ENCODE measurements at regions of chr13 and their contacts with region 1.

Region 1: DNA sequence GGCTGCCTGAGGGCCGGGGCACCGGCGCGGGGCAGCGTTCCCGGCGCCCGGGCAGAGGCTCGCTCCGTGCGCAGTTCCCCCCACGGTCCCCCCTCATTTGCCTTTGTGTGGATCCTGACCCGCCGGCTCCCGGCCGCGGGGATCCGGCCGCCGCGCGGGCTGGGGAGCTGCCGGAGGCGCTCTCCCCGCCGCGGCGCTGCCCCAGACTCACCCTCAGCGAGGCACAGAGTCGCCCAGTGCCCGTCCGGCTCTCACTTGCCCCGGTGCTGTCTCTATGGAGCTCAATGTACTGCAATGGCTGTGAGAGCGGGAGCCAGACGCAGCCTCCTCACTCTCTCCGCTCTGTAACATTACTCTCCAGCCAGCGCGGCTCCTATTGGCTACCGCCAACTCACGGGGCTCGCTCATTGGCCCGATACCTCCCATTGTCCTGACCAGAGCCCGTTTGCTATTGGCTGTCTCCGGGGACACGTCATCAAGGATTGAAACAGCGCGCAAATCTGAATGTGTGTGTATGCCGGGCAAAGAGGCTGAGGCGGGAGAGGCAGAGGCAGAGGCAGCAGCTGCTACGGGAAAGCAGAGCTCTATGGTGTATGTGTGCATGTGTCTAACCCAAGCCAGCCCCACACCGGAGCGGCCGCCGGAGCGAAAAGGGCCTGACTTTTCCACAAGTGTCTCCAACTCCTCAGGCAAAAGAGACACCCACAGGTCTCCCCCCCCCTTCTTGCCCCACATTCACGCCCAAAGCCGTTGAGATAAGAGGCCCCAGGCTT is at the start of gene HMGB1:
- DNase-seq: peak; percentile 99
- ATAC-seq: peak; percentile 98
- total RNA-seq, gene HMGB1: 183 TPM

Region 2: DNA sequence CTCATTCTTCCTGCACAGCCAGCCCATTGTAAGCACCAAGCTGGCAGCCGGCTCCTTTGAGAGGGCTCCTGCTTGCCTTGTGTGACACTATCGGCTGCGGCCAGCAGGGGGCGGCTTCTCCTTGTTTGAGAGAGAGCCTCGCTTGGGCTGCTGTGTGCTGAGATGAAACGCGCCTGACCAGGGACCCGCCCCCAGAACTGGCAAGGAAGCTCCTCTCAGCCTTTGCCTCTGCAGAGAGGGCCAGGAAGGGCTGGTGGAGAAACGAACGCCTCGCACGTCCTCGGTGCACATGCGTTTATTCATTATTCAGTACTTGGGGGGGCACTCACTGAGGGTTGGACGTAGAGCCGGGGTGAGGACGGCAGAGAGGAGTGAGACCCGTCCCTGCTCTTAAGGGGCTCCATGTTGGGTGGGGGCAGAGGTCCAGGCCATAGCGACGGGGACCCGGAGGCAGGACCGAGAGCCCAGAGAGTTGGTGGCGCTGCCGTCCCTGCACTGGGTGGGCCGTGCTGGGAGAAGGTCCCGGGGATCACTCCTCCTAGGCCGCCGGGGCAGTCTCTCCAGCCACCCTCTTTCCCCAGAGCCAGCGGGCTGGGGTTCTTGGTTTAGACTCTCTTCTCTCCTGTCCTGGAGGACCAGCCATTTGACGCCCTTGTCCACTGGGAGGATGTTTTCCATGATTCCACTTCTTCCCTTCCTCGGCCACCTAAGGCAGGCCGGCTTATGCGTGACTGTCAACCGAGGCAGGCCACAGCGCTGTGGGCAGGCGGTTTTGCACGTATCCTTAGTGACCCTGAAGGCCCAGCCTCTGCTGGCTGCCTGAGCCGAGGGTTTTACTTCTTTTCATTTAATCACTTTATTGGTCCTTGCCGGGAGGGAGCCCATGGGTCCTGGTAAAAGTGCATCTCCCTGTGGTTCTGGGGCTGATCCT is 332.9 kb before region 1 on chr13:
- intact Hi-C with region 1: loop called (anchors 5 kb)
- DNase-seq: peak; percentile 98
- ATAC-seq: peak; percentile 95

Region 3: GRCh38 chr13:30341815-30342570 is 123.8 kb before region 1 on chr13:
- intact Hi-C with region 1: loop called (anchors 10 kb)
- DNase-seq: peak; percentile 92
- ATAC-seq: peak; percentile 90

Region 4: DNA sequence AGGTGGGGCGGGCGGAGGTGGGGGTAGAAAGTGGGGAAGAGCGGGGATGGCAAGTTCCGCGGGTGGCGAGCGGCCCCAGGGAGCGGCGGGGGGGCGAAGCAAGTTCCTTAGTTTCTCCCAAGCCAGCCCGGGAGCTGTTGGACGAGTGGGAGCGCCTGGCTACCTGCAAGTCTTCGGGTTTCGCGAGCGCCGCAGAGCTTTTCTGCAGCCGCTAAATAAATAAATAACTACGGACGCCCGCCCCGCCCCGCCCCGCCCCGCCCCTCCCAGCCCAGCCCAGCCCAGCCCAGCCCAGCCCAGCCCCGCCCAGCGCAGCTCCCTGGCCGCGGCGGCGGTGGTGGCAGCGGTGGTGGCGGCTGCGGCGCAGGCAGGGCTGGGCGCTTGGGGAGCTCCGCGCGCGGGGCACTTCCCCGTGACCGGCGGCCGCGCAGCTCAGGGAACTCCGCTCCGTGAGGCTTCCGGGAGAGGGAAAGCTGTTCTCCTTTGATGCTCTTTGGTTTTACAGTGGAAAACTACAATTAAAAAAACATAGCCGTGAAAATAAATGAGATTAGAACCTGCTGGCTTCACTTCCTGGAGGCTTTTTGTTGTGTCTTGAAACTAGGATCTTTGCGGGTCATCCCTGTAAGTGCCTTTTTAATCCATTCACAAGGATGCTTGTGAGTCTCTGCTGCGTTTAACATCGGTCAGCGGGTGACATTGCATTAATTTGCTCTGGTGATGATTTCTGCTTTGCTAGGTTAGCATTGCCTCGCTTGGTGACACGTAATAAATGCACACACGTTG is 43.5 kb before region 1 on chr13 and contains the start of gene UBE2L5:
- intact Hi-C with region 1: loop called (anchors 1 kb)
- DNase-seq: peak; percentile 93
- ATAC-seq: peak; percentile 92
- total RNA-seq, gene UBE2L5: not detected

Region 5: GRCh38 chr13:30486230-30487074 is 20.7 kb after region 1 on chr13:
- intact Hi-C with region 1: no loop called
- DNase-seq: no peak
- ATAC-seq: no peak

Region 6: DNA sequence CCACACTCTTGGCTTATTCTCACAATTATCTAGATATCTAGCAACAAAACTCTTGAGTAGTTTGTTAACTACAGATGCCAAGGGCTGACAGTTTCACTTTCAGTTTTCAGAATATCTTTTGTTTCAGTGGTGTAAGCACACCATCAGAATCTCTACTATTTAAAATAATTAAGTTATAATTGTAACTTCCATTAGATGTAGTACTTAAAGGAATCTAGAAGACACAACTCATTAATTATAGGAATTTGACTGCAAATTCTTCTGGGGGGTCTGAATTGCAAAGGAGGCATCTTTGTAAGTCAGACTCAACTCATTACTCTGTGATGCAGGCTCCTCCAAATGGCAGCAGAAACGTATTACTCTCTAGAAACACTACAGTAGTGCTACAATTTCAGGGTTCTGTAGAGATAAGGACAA is 107.1 kb after region 1 on chr13:
- intact Hi-C with region 1: loop called (anchors 5 kb)
- DNase-seq: no peak
- ATAC-seq: peak; percentile 68

Region 7: GRCh38 chr13:30673669-30674521 is 208.1 kb after region 1 on chr13:
- intact Hi-C with region 1: loop called (anchors 1 kb)
- DNase-seq: peak; percentile 95
- ATAC-seq: peak; percentile 95

Region 8: GRCh38 chr13:31044377-31045285 is 578.9 kb after region 1 on chr13:
- intact Hi-C with region 1: loop called (anchors 10 kb)
- DNase-seq: peak; percentile 88
- ATAC-seq: peak; percentile 84

Measured in Right ventricle myocardium inferior (tissue), 1 donor.